ENCODE measurements at regions of chr1 and their contacts with region 1.

Region 1: DNA sequence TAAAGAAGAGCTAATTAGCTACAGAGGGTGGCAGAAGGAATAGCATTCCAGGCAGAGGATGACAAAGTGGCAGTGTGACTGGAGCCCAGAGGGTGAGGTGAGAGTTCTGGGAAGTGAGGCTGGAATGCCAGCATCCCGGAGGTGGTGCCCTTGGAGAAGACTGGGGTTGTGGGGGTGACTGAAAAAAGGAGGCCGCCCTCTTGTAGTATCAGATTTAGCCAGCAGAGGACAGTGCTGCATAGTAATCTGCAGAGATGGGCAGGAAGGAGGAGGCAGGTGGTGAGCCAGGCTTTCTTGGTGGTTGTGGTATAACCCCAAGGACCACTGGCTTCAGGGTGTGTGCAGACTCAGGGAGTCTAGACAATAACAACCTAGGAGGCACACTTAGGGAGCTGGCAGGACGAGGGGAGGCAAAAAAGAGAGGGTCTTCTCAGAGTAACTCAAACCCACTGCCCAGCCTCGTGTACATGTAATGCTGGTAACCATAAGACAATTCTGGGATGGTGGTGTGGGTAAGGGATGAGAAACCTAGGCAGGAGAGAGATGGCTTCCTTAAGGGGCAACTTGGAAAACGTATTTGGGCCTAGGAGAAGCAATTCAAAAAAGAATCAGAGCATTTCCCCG is 30.5 kb downstream of the MROH7 start:
- DNase-seq: peak; percentile 85
- ATAC-seq: peak; percentile 99
- H3K4me3 Mint-ChIP-seq: no peak overlapping the region
- H3K27ac Mint-ChIP-seq: no peak overlapping the region
- H3K4me1 Mint-ChIP-seq: peaks cover 4% of the 10 kb centered on the region
- H3K27me3 Mint-ChIP-seq: no peaks in the 10 kb centered on the region
- CTCF ChIP-seq: peak; percentile 96

Region 2: GRCh38 chr1:54698346-54698745 is 26.2 kb after region 1 on chr1:
- CTCF ChIA-PET with region 1: no interaction called
- POLR2A ChIA-PET with region 1: no interaction called
- intact Hi-C with region 1: no loop called
- DNase-seq: no peak
- ATAC-seq: no peak
- H3K4me3 Mint-ChIP-seq: no peak overlapping the region
- H3K27ac Mint-ChIP-seq: no peak overlapping the region
- H3K4me1 Mint-ChIP-seq: peaks cover 3% of the 10 kb centered on the region
- H3K27me3 Mint-ChIP-seq: peaks cover 5% of the 10 kb centered on the region
- CTCF ChIP-seq: no peak

Region 3: GRCh38 chr1:54810100-54810942 is 138.2 kb after region 1 on chr1:
- CTCF ChIA-PET with region 1: interaction called, 12 read pairs
- POLR2A ChIA-PET with region 1: interaction called, 3 read pairs
- intact Hi-C with region 1: loop called (anchors 2 kb)
- DNase-seq: peak; percentile 80
- ATAC-seq: peak; percentile 91
- H3K4me3 Mint-ChIP-seq: no peak overlapping the region
- H3K27ac Mint-ChIP-seq: no peak overlapping the region
- H3K4me1 Mint-ChIP-seq: peaks cover under 1% of the 10 kb centered on the region
- H3K27me3 Mint-ChIP-seq: no peaks in the 10 kb centered on the region
- CTCF ChIP-seq: peak; percentile 81

Measured in activated CD8-positive, alpha-beta T cell treated with anti-CD3 and anti-CD28 coated beads for 36 hours (primary cell).